CD8-positive, alpha-beta T cell (primary cell): ENCODE measurements at regions of chr2 and their contacts with region 1.

Region 1: DNA sequence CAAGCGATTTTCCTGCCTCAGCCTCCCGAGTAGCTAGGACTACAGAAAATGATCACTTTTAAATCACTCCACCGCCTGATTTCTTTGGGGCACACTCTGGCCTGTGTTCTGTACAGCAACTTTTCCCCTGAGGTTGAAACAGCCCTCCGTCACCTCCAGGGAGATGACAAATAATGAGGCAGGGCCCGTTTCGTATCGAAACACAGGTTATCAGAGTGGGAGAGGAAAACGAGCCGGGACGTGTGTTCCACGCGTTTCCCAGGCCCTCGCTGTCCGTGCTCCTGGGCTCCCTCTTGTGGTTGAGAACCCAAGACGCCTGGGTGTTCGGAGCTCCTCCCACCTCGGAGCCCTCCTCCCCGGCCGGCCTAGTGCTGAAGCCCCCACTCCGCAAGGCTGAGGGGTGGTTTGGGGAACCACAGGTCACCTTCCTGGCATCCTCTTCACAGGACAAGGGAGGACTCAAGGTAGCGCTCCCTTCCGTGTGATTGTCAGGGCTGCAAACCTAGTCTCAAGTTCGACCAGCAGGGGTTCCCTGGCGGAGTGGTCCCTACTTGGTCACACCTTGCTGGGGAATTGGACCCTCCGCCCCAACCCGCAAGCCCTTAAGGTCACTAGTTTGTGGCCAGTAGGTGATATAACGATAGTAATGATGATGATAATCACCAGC is 12.8 kb downstream of the ATP6V1B1 start:
- DNase-seq: peak; percentile 55 to 86 (median 79)
- ATAC-seq: peak; percentile 97
- H3K4me3 ChIP-seq: peak overlapping the region; percentile 3 to 29
- H3K4me3 Mint-ChIP-seq: peak overlapping the region; percentile 77
- H3K27ac ChIP-seq: no peak overlapping the region
- H3K27ac Mint-ChIP-seq: no peak overlapping the region
- H3K4me1 ChIP-seq: no peaks in the 10 kb centered on the region
- H3K4me1 Mint-ChIP-seq: peaks cover 13% of the 10 kb centered on the region
- H3K27me3 ChIP-seq: peaks cover 0 to under 1% of the 10 kb centered on the region in 2 experiments
- H3K27me3 Mint-ChIP-seq: peaks cover 17% of the 10 kb centered on the region
- CTCF ChIP-seq: peak; percentile 75

Region 2: GRCh38 chr2:70789304-70790135 is 158.9 kb before region 1 on chr2:
- CTCF ChIA-PET with region 1: interaction called, 12 read pairs
- POLR2A ChIA-PET with region 1: no interaction called
- intact Hi-C with region 1: loop called (anchors 1 to 2 kb)
- DNase-seq: peak; percentile 30 to 78 (median 67)
- ATAC-seq: peak; percentile 73
- H3K4me3 ChIP-seq: peak overlapping the region; percentile 32 to 36
- H3K4me3 Mint-ChIP-seq: peak overlapping the region; percentile 82
- H3K27ac ChIP-seq: no peak overlapping the region
- H3K27ac Mint-ChIP-seq: no peak overlapping the region
- H3K4me1 ChIP-seq: peaks cover 8% of the 10 kb centered on the region
- H3K4me1 Mint-ChIP-seq: peaks cover 13% of the 10 kb centered on the region
- H3K27me3 ChIP-seq: peaks cover 7 to 11% of the 10 kb centered on the region in 2 experiments
- H3K27me3 Mint-ChIP-seq: peaks cover 51% of the 10 kb centered on the region
- CTCF ChIP-seq: peak; percentile 54

Region 3: GRCh38 chr2:70871398-70872211 is 76.9 kb before region 1 on chr2:
- CTCF ChIA-PET with region 1: interaction called, 73 read pairs
- POLR2A ChIA-PET with region 1: no interaction called
- intact Hi-C with region 1: loop called (anchors 1 kb)
- DNase-seq: peak; percentile 60 to 88 (median 82)
- ATAC-seq: peak; percentile 94
- H3K4me3 ChIP-seq: peak overlapping the region in 1 of 2 experiments; percentile 21
- H3K4me3 Mint-ChIP-seq: peak overlapping the region; percentile 22
- H3K27ac ChIP-seq: no peak overlapping the region
- H3K27ac Mint-ChIP-seq: no peak overlapping the region
- H3K4me1 ChIP-seq: peaks cover 8% of the 10 kb centered on the region
- H3K4me1 Mint-ChIP-seq: peaks cover 5% of the 10 kb centered on the region
- H3K27me3 ChIP-seq: peaks cover 11 to 18% of the 10 kb centered on the region in 2 experiments
- H3K27me3 Mint-ChIP-seq: peaks cover 44% of the 10 kb centered on the region
- CTCF ChIP-seq: peak; percentile 97

Region 4: DNA sequence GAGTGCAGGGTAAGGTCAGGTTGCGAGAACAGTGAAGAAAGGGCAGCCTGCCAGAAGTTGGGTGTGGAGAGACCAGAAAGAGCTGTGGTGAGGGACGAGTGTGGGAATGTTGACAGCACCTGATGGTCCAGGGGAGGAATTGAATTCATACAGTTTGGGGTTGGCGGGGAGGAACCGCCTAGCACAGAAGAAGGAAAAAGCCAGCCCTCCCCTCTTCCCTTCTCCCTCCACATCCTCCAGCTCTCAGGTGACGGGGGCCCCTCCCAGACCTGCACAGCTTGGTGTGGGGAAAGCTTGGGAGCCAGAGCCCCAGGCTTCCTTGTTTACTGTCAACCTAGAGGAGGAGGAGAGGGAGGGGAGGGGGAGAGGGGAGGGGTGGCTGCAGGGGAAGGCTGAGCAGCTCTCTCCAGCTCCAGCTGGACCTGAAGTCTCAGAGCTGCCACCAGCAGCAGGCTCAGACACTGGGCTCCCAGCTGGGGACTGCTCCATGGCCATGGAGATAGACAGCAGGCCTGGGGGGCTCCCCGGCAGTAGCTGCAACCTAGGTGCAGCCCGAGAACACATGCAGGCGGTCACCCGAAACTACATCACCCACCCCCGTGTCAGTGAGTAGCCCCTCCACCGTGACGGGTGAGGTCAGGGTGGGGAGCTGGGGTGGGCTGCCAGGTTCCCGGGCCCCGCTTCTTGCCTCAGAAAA is 12.9 kb before region 1 on chr2 and contains the start of gene ATP6V1B1:
- CTCF ChIA-PET with region 1: interaction called, 20 read pairs
- POLR2A ChIA-PET with region 1: no interaction called
- intact Hi-C with region 1: no loop called
- DNase-seq: peak in 1 of 9 experiments; percentile 32
- ATAC-seq: no peak
- H3K4me3 ChIP-seq: no peak within 1 kb of the TSS
- H3K4me3 Mint-ChIP-seq: no peak within 1 kb of the TSS
- H3K27ac ChIP-seq: no peak within 1 kb of the TSS
- H3K27ac Mint-ChIP-seq: no peak within 1 kb of the TSS
- H3K4me1 ChIP-seq: no peaks in the 10 kb centered on the region
- H3K4me1 Mint-ChIP-seq: no peaks in the 10 kb centered on the region
- H3K27me3 ChIP-seq: no peaks in the 10 kb centered on the region
- H3K27me3 Mint-ChIP-seq: peaks cover 24% of the 10 kb centered on the region
- CTCF ChIP-seq: no peak
- total RNA-seq, gene ATP6V1B1: not detected

Region 5: DNA sequence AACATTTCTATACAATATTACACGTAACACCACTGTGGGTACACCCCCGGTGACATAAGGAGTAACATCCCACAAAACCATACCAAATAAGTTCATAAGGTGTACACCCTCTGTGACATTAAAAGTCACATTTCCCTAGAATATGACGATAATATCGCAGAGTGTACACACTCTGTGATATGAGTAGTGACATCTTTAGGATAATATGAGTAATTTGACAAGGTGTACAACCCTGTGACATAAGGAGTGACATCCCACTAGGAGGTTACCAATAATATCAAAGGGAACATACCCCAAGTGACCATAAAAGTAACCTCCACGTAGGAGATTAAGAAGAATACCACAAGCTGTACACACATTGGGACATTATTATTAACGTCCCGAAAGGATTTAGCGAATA is 70.2 kb after region 1 on chr2:
- CTCF ChIA-PET with region 1: no interaction called
- POLR2A ChIA-PET with region 1: no interaction called
- intact Hi-C with region 1: no loop called
- DNase-seq: no peak
- ATAC-seq: no peak
- H3K4me3 ChIP-seq: no peak overlapping the region
- H3K4me3 Mint-ChIP-seq: no peak overlapping the region
- H3K27ac ChIP-seq: no peak overlapping the region
- H3K27ac Mint-ChIP-seq: no peak overlapping the region
- H3K4me1 ChIP-seq: no peaks in the 10 kb centered on the region
- H3K4me1 Mint-ChIP-seq: peaks cover 3% of the 10 kb centered on the region
- H3K27me3 ChIP-seq: no peaks in the 10 kb centered on the region
- H3K27me3 Mint-ChIP-seq: no peaks in the 10 kb centered on the region
- CTCF ChIP-seq: no peak

Region 6: DNA sequence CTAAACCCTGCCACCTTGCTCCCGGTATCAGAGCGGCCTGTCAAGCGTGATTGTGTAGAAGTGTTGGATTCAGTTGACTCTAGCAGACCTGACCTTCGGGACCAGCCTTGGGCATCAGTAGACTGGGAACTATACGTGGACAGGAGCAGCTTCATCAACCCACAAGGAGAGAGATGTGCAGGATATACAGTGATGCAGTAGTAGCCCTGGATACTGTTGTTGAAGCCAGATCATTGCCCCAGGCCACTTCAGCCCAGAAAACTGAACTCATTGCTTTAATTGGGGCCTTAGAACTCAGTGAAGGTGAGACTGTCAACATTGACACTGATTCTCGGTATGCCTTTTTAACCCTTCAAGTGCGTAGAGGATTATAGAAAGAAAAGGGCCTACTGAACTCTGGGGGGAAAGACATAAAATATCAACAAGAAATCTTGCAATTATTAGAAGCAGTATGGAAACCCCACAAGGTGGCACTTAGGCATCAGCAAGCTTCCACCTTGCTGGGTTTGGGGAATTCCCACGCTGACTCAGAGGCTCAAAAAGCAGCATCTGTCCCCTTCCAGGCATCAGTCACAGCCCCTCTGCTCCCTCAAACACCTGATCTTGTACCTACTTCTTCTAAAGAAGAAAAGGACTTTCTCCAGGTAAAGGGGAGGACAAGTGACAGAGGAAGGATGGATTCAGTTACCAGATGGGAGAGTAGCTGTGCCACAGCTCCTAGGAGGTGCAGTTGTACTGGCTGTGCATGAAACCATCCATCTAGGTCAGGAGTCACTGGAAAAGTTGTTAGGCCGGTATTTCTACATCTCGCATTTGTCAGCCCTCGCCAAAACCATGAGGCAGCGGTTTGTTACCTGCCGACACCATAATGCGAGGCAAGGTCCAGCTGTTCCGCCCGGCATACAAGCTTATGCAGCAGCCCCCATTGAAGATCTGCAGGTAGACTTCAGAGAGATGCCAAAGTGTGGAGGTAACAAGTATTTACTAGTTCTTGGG is 101.2 kb after region 1 on chr2:
- CTCF ChIA-PET with region 1: no interaction called
- POLR2A ChIA-PET with region 1: no interaction called
- intact Hi-C with region 1: no loop called
- DNase-seq: peak in 4 of 9 experiments; percentile 43 to 61 (median 46)
- ATAC-seq: peak; percentile 44
- H3K4me3 ChIP-seq: no peak overlapping the region
- H3K4me3 Mint-ChIP-seq: no peak overlapping the region
- H3K27ac ChIP-seq: no peak overlapping the region
- H3K27ac Mint-ChIP-seq: no peak overlapping the region
- H3K4me1 ChIP-seq: no peaks in the 10 kb centered on the region
- H3K4me1 Mint-ChIP-seq: no peaks in the 10 kb centered on the region
- H3K27me3 ChIP-seq: no peaks in the 10 kb centered on the region
- H3K27me3 Mint-ChIP-seq: no peaks in the 10 kb centered on the region
- CTCF ChIP-seq: no peak